Activated CD8-positive, alpha-beta T cell treated with anti-CD3 and anti-CD28 coated beads, Interleukin-2, amount 10 ng/mL, durations not matched to agents 7 days and 5 days (primary cell): ENCODE measurements at regions of chr1 and their contacts with region 1.

Region 1: GRCh38 chr1:44812822-44813543 is 4.7 kb downstream of the BTBD19 start:
- DNase-seq: no peak
- ATAC-seq: no peak
- H3K4me3 Mint-ChIP-seq: peak overlapping the region; percentile 84
- H3K27ac Mint-ChIP-seq: peak overlapping the region; percentile 100
- H3K4me1 Mint-ChIP-seq: peaks cover 70% of the 10 kb centered on the region
- H3K27me3 Mint-ChIP-seq: no peaks in the 10 kb centered on the region

Region 2: DNA sequence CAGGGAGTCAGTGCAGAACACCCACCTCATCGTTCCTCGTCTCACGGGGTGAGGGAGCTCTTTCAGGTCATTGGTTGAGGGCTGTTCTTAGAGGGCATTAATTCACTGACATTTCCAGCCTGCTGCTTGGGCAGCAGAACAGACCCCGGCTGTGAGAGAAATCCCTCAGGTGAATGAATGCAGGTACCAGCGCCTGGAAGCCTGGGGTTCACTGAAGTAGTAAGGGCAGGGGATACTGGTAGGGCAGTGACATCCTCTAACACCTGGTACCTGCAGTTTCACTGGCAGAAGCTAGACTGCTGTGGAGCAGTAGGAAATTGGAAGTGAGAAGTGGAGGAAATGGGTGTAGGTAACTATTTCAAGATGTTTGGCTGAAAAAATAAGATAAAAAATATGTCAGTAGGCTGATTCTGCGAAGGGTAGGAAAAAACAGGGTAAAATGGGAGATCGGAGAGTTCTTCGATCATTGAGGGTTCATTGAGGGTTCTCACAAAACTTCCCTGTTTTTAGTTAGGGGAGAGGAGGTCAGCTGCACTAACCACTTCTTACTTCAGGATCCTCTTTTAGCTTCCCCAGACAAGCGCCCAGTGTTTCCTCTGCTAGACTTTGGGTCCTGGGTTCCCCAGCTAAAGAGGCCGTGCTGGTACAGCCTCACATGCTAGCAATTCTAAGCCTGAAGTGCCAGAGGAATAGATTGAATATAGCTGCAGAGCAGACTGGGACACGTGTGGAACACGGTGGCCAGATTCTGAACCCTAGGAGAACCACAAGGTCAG is 352.7 kb before region 1 on chr1:
- CTCF ChIA-PET with region 1: no interaction called
- POLR2A ChIA-PET with region 1: no interaction called
- DNase-seq: no peak
- ATAC-seq: no peak
- H3K4me3 Mint-ChIP-seq: no peak overlapping the region
- H3K27ac Mint-ChIP-seq: no peak overlapping the region
- H3K4me1 Mint-ChIP-seq: no peaks in the 10 kb centered on the region
- H3K27me3 Mint-ChIP-seq: peaks cover 30% of the 10 kb centered on the region

Region 3: DNA sequence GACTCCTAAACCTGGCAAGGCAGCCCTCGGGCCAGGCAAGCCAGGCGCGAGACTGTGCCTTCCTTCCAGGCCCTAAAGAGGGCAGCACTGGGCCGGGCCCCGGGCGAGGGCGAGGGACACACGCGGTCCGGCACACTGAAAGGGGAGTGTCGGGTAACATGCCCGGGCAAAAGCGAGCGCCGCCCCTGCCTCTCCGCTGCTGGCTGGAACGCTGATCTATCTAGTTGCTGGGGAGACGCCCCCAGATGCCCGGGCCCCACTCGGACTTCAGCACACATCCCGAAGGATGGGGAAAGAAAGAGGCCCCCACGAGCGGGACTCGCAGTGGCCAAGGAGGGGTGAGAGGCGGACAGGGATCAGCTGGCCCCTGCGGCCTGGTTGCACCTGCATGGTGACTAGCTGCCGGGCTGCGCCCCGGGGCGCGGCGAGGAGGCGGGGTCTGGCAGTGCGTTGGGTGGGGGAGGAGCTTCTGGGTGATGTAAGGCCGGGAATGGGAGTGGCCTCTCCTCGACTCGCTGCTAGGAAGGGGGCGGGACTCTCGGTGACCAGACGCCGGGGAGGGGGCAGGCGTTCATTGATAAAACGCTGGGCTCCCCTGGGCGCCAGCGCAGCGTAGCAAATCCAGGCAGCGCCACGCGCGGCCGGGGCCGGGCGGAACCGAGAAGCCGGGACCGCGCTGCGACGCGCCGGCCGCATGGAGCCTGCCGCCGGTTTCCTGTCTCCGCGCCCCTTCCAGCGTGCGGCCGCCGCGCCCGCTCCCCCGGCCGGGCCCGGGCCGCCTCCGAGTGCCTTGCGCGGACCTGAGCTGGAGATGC is 13.0 kb before region 1 on chr1 and contains the start of gene PLK3:
- CTCF ChIA-PET with region 1: interaction called, 66 read pairs
- POLR2A ChIA-PET with region 1: interaction called, 713 read pairs
- DNase-seq: peak; percentile 99
- ATAC-seq: peak; percentile 77
- H3K4me3 Mint-ChIP-seq: peak within 1 kb of the TSS; percentile 96
- H3K27ac Mint-ChIP-seq: peak within 1 kb of the TSS; percentile 100
- H3K4me1 Mint-ChIP-seq: peaks cover 42% of the 10 kb centered on the region
- H3K27me3 Mint-ChIP-seq: no peaks in the 10 kb centered on the region
- total RNA-seq, gene PLK3: 64.8 to 68.0 TPM